HEK293 (cell line): ENCODE measurements at regions of chr17 and their contacts with region 1.

Region 1: GRCh38 chr17:47265983-47266541 is 12.4 kb downstream of the ITGB3 start:
- H3K4me3 ChIP-seq: no peak overlapping the region
- H3K27ac ChIP-seq: no peak overlapping the region
- H3K4me1 ChIP-seq: no peaks in the 10 kb centered on the region
- CTCF ChIP-seq: no peak

Region 2: DNA sequence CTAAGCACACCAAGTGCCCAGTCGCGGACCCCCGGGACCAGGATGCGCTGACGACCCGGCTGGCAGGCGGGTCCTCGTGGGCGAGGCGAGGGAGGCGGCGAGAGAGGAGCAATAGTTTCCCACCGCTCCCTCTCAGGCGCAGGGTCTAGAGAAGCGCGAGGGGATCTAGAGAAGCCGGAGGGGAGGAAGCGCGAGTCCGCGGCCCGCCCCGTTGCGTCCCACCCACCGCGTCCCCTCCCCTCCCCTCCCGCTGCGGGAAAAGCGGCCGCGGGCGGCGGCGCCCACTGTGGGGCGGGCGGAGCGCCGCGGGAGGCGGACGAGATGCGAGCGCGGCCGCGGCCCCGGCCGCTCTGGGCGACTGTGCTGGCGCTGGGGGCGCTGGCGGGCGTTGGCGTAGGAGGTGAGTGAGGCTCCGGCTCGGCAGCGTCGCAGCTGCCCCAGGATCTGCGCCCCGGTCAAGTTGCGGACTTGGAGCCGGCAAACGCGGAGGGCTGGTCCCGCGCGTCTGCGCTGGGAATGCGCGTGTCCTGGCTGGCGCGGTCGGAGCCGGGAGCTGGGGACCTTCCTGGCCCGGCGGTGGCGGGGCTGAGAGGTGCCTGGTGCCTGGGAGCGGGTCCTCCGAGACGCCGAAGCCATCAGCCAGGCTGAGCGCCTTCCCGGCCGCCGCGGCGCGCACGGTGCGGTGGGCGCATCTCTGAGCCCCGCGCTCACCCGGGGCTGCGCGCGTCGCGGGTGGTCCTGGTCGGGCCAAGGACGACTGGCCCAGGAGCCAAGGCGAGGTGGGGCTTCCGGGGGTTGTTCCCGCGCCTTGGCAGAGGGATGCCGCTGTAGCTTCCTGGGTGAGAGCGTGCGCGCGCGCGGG is 12.3 kb before region 1 on chr17 and contains the start of gene ITGB3:
- CTCF ChIA-PET with region 1: no interaction called
- POLR2A ChIA-PET with region 1: no interaction called
- H3K4me3 ChIP-seq: peak within 1 kb of the TSS; percentile 65
- H3K27ac ChIP-seq: peak within 1 kb of the TSS; percentile 27; the same call in 1 of the 2 replicates
- H3K4me1 ChIP-seq: no peaks in the 10 kb centered on the region; the same call in 1 of the 2 replicates
- CTCF ChIP-seq: peak; percentile 63

Region 3: DNA sequence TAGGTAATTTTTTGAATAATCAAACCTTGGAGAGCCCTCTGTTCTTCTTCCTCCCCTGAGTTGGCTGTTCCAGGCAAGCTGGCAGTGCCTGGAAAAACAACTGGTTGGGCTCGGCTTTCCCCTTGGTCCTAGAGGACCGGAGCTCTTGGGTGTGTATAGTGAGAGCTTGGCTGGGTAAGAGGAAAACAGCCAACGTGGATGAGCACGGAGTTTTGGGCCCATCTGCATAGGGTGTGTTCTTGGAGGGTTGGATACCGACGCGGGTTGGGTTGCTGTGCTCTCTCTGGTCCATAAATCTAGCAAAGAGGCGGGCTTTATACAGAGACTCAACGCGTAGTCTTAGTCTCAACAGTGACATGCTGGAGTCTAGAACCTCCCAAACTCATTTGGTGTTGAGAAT is 10.8 kb after region 1 on chr17:
- CTCF ChIA-PET with region 1: no interaction called
- POLR2A ChIA-PET with region 1: interaction called, 10 read pairs
- H3K4me3 ChIP-seq: no peak overlapping the region
- H3K27ac ChIP-seq: peak overlapping the region; percentile 61; the same call in 1 of the 2 replicates
- H3K4me1 ChIP-seq: peaks cover 33% of the 10 kb centered on the region
- CTCF ChIP-seq: no peak